ENCODE measurements at regions of chr6 and their contacts with region 1.

Region 1: DNA sequence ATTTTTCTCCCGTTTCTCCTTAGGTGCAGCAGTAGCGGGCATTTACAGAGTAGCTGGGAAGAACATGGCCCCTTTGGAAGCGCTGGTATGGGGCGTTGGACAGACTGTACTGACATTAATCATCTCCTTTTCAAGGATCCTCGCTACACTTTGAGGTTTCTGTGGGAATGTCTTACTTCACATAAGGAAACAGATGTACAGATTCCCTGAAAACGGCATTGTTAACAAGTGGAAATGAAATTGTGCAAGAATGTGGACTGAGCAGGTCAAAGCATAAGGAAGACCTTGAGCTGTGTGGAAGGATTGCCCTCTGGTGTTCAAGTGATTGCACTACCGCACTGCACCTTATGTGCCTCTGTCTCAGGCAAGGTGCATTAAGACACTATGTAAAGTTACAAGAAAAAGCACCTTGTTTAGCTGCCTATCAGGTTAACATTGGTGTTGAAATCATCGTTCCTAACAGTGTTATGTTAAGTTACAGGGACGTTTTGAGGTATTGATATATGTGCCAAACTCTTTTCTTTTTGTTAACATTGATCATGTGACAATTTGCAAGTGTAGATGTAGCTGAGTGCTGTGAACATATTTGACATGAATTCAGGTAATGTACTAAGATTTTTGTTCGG is 38.0 kb downstream of the TMEM170B start:
- DNase-seq: peak; percentile 84
- H3K4me3 ChIP-seq: peak overlapping the region in 1 of 3 experiments; percentile 32
- H3K27ac ChIP-seq: no peak overlapping the region
- H3K4me1 ChIP-seq: peaks cover 3% of the 10 kb centered on the region
- H3K27me3 ChIP-seq: no peaks in the 10 kb centered on the region
- CTCF ChIP-seq: peak; percentile 90 to 93
- POLR2A ChIP-seq: no peak

Region 2: GRCh38 chr6:10837995-10838793 is 737.3 kb before region 1 on chr6 and contains the start of gene MAK:
- CTCF ChIA-PET with region 1: no interaction called
- POLR2A ChIA-PET with region 1: no interaction called
- dilution Hi-C with region 1: no loop called
- intact Hi-C with region 1: loop called (anchors 5 kb)
- DNase-seq: peak; percentile 90
- H3K4me3 ChIP-seq: peak within 1 kb of the TSS; percentile 27 to 56 (median 43)
- H3K27ac ChIP-seq: no peak within 1 kb of the TSS
- H3K4me1 ChIP-seq: peaks cover 8% of the 10 kb centered on the region
- H3K27me3 ChIP-seq: peaks cover 34 to 35% of the 10 kb centered on the region in 2 experiments
- CTCF ChIP-seq: no peak
- POLR2A ChIP-seq: no peak
- total RNA-seq, gene MAK: not detected in 2 replicates

Region 3: DNA sequence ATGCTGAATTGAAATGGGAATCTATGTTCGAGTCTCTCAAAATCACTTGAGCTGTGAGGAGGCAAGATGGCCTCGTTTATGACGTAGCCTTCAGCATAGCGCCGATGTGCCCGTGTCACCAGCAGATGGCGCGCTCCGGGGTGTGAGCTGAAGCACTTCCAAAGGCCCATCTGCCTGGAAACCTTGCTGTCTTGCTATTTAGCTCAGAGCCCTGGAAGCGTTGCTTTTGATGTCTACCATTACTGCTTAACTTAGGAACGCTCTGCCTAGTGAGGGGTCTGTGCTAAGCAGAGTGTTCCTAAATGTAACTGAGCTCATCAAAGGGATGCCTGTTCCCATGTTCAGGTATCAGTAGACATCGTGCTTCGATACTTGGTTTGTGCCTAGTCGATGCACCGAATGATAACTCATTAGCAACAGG is 620.9 kb before region 1 on chr6:
- CTCF ChIA-PET with region 1: interaction called, 63 read pairs
- POLR2A ChIA-PET with region 1: no interaction called
- dilution Hi-C with region 1: no loop called
- intact Hi-C with region 1: loop called (anchors 1 kb)
- DNase-seq: peak; percentile 73
- H3K4me3 ChIP-seq: no peak overlapping the region
- H3K27ac ChIP-seq: no peak overlapping the region
- H3K4me1 ChIP-seq: no peaks in the 10 kb centered on the region
- H3K27me3 ChIP-seq: peaks cover 0 to 2% of the 10 kb centered on the region in 2 experiments
- CTCF ChIP-seq: peak; percentile 91 to 96
- POLR2A ChIP-seq: no peak

Region 4: GRCh38 chr6:11064836-11065235 is 510.7 kb before region 1 on chr6:
- CTCF ChIA-PET with region 1: interaction called, 11 read pairs
- POLR2A ChIA-PET with region 1: no interaction called
- dilution Hi-C with region 1: no loop called
- intact Hi-C with region 1: no loop called
- DNase-seq: no peak
- H3K4me3 ChIP-seq: no peak overlapping the region
- H3K27ac ChIP-seq: no peak overlapping the region
- H3K4me1 ChIP-seq: no peaks in the 10 kb centered on the region
- H3K27me3 ChIP-seq: peaks cover 0 to 3% of the 10 kb centered on the region in 2 experiments
- CTCF ChIP-seq: no peak
- POLR2A ChIP-seq: no peak

Region 5: DNA sequence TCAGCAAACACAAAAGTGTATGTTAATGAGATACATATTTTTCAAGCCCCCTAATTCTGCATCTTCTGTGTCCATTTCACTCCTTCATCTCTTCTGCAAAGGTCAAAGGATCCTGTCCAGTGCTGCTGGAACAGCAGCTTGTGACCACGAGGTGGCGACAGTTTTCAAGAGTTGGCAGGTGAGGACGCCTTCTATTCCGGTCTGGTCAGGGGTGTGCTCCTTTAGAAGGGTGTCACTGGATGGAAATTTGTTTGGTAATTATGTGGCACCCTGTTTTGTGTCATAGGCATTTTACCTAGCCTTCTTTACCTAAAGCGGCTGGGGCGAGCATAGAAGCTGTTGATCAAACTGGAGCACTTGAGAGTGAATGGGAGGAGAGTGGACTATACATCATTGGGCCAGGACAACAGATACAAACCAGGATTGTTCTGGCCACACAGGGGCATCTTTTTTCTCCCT is 431.1 kb before region 1 on chr6:
- CTCF ChIA-PET with region 1: interaction called, 32 read pairs
- POLR2A ChIA-PET with region 1: no interaction called
- dilution Hi-C with region 1: no loop called
- intact Hi-C with region 1: loop called (anchors 1 kb)
- DNase-seq: peak; percentile 70
- H3K4me3 ChIP-seq: no peak overlapping the region
- H3K27ac ChIP-seq: no peak overlapping the region
- H3K4me1 ChIP-seq: no peaks in the 10 kb centered on the region
- H3K27me3 ChIP-seq: no peaks in the 10 kb centered on the region
- CTCF ChIP-seq: peak; percentile 86 to 95
- POLR2A ChIP-seq: no peak

Region 6: DNA sequence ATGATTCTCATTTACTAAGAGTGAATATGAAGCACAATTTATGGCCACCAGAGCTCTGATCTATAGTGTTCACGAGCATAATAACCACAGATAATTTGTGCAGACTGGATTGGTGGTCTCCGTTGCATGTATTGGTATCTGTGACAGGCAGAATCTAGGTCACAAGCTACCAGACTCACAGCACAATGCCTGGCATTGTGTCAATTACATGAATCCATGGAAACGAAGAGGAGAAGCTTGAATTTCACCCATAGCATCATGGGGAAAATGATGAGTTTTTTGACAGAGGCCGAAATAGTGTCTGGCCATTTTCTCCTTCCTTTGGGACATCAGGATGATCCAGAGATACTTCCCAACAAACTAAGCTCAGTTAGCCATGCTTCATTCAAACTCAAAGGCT is 90.2 kb before region 1 on chr6:
- CTCF ChIA-PET with region 1: no interaction called
- POLR2A ChIA-PET with region 1: no interaction called
- dilution Hi-C with region 1: no loop called
- intact Hi-C with region 1: no loop called
- DNase-seq: peak; percentile 16
- H3K4me3 ChIP-seq: no peak overlapping the region
- H3K27ac ChIP-seq: no peak overlapping the region
- H3K4me1 ChIP-seq: no peaks in the 10 kb centered on the region
- H3K27me3 ChIP-seq: no peaks in the 10 kb centered on the region
- CTCF ChIP-seq: no peak
- POLR2A ChIP-seq: no peak

Region 7: DNA sequence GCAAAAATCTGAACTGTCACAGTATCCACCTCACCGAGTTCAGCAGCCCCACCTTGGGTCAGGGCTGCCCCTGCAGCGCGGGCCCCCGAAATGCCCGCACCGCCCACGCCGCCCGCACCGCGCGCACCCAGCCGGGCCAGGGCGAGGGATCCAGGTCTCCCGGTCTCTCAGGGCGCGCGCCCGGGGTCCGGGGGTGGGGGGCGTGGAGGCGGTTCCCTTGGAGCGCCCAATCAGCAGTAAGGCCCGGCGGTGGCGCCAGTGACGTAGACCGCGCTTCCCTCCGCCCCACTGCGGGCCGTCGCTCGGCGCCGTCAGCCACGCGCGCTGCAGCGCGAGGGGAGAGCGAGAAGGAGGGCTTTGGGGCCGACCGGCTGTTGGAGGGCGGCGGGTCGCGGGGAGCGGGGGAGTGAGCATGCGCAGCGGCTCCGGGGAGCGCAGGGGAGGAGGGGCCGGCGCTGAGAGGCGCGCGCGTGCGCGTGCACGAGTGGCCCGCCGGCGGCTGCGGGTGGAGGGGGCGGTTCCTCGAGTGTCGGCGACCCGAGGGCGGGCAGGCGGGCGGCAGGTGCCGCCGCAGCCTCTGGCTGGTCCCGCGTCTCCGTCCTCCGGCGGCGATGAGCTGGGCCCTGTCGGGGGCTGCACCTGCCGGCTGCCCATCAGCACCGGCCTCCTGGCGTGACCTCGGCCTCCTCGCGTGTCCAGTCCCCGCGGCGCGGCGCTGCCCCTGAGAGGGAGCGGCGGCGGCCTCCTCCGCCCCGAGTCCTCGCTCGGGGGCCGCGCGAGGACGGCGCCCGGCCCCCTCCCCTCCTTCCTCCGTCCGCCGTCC is 38.1 kb before region 1 on chr6 and contains the start of gene TMEM170B:
- CTCF ChIA-PET with region 1: interaction called, 5 read pairs
- POLR2A ChIA-PET with region 1: no interaction called
- dilution Hi-C with region 1: no loop called
- intact Hi-C with region 1: loop called (anchors 5 kb)
- DNase-seq: peak; percentile 93
- H3K4me3 ChIP-seq: peak within 1 kb of the TSS; percentile 54 to 81 (median 77)
- H3K27ac ChIP-seq: peak within 1 kb of the TSS; percentile 31
- H3K4me1 ChIP-seq: peaks cover 25% of the 10 kb centered on the region
- H3K27me3 ChIP-seq: no peaks in the 10 kb centered on the region
- CTCF ChIP-seq: no peak
- POLR2A ChIP-seq: no peak
- total RNA-seq, gene TMEM170B: 4.1 and 4.2 TPM in 2 replicates

Region 8: GRCh38 chr6:11563793-11564192 is 11.7 kb before region 1 on chr6:
- CTCF ChIA-PET with region 1: interaction called, 17 read pairs
- POLR2A ChIA-PET with region 1: no interaction called
- dilution Hi-C with region 1: no loop called
- intact Hi-C with region 1: no loop called
- DNase-seq: peak; percentile 7
- H3K4me3 ChIP-seq: no peak overlapping the region
- H3K27ac ChIP-seq: no peak overlapping the region
- H3K4me1 ChIP-seq: peaks cover 4% of the 10 kb centered on the region
- H3K27me3 ChIP-seq: no peaks in the 10 kb centered on the region
- CTCF ChIP-seq: no peak
- POLR2A ChIP-seq: no peak

Region 9: GRCh38 chr6:11662323-11662722 is 86.8 kb after region 1 on chr6:
- CTCF ChIA-PET with region 1: no interaction called
- POLR2A ChIA-PET with region 1: no interaction called
- dilution Hi-C with region 1: no loop called
- intact Hi-C with region 1: no loop called
- DNase-seq: no peak
- H3K4me3 ChIP-seq: no peak overlapping the region
- H3K27ac ChIP-seq: no peak overlapping the region
- H3K4me1 ChIP-seq: no peaks in the 10 kb centered on the region
- H3K27me3 ChIP-seq: no peaks in the 10 kb centered on the region
- CTCF ChIP-seq: no peak
- POLR2A ChIP-seq: no peak

Measured in endothelial cell of umbilical vein (primary cell).